Activated CD4-positive, alpha-beta T cell treated with anti-CD3 and anti-CD28 coated beads for 36 hours (primary cell): ENCODE measurements at regions of chr15 and their contacts with region 1.

Region 1: GRCh38 chr15:85330901-85331588 is 49.4 kb upstream of the AKAP13 start:
- DNase-seq: peak; percentile 81
- ATAC-seq: peak; percentile 77
- H3K4me3 Mint-ChIP-seq: peak overlapping the region; percentile 80
- H3K27ac Mint-ChIP-seq: peak overlapping the region; percentile 88
- H3K4me1 Mint-ChIP-seq: peaks cover 46% of the 10 kb centered on the region
- H3K27me3 Mint-ChIP-seq: no peaks in the 10 kb centered on the region

Region 2: GRCh38 chr15:85296615-85297402 is 34.2 kb before region 1 on chr15:
- CTCF ChIA-PET with region 1: interaction called, 22 read pairs
- POLR2A ChIA-PET with region 1: no interaction called
- intact Hi-C with region 1: loop called (anchors 1 to 2 kb)
- DNase-seq: peak; percentile 79
- ATAC-seq: peak; percentile 100
- H3K4me3 Mint-ChIP-seq: no peak overlapping the region
- H3K27ac Mint-ChIP-seq: peak overlapping the region; percentile 38
- H3K4me1 Mint-ChIP-seq: peaks cover 11% of the 10 kb centered on the region
- H3K27me3 Mint-ChIP-seq: peaks cover 1% of the 10 kb centered on the region

Region 3: DNA sequence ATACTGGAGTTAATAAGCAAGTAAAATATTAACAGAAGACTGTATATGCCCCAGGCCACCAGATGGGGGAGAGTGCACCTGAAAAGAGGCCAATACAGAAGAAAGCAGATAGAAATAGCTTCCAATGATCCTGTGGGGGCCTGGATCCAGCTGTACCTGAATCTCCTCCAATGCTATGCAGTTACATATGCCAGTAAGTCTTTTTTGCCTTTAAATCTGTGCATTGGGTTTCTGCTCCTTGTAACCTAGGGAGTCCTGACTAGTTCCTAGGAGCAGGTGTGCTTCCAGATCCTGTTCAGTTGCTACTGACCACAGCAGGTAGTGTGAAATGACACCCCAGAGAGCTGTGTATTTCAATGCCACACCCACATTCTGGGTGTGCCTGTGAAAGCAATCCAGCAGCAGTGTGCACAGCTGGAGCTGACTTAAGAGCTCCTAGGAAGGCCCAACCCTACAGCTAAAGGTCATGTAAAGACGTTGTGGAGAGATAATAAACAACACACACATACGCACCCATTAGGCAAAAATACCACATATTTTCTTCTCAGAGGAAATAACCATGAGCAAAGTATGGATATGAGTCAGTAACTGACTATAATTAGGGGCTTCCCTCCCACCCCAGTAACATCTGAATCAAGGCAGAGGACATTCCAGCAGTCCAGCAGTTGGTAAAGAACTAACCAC is 12.9 kb before region 1 on chr15:
- CTCF ChIA-PET with region 1: interaction called, 14 read pairs
- POLR2A ChIA-PET with region 1: interaction called, 12 read pairs
- intact Hi-C with region 1: loop called in 1 of 2 experiments (anchors 2 kb)
- DNase-seq: peak; percentile 40
- ATAC-seq: peak; percentile 73
- H3K4me3 Mint-ChIP-seq: peak overlapping the region; percentile 11
- H3K27ac Mint-ChIP-seq: peak overlapping the region; percentile 33
- H3K4me1 Mint-ChIP-seq: peaks cover 53% of the 10 kb centered on the region
- H3K27me3 Mint-ChIP-seq: no peaks in the 10 kb centered on the region

Region 4: DNA sequence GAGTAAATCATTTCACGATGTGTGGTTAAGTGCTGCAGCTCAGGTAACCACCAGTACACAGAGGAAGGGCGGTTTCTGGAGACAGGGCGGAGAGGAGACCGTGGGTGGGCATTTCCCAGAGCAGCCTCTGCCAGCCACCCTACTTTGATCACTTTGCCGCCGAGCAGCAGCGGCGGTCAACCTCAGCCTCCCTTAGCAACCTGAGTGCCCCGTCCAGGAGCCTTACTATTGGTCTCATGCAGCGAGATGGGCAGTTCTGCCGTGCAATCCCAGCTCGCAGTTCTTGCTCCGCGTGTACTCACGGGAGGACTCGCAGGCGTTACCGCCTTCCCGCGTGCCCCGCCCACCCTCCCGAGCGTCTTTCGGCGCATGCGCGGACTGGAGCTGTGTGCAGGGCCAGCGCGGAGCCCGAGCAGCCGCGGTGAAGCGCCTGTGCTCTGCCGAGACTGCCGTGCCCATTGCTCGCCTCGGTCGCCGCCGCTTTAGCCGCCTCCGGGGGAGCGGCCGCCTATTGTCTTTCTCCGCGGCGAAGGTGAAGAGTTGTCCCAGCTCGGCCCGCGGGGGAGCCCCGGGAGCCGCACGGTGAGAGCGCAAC is 49.3 kb after region 1 on chr15 and contains the start of gene AKAP13:
- CTCF ChIA-PET with region 1: interaction called, 4 read pairs
- POLR2A ChIA-PET with region 1: interaction called, 6 read pairs
- intact Hi-C with region 1: loop called in 1 of 2 experiments (anchors 1 kb)
- DNase-seq: peak; percentile 97
- ATAC-seq: peak; percentile 90
- H3K4me3 Mint-ChIP-seq: peak within 1 kb of the TSS; percentile 72
- H3K27ac Mint-ChIP-seq: peak within 1 kb of the TSS; percentile 92
- H3K4me1 Mint-ChIP-seq: peaks cover 50% of the 10 kb centered on the region
- H3K27me3 Mint-ChIP-seq: no peaks in the 10 kb centered on the region
- total RNA-seq, gene AKAP13: 85.1 to 104 TPM

Region 5: DNA sequence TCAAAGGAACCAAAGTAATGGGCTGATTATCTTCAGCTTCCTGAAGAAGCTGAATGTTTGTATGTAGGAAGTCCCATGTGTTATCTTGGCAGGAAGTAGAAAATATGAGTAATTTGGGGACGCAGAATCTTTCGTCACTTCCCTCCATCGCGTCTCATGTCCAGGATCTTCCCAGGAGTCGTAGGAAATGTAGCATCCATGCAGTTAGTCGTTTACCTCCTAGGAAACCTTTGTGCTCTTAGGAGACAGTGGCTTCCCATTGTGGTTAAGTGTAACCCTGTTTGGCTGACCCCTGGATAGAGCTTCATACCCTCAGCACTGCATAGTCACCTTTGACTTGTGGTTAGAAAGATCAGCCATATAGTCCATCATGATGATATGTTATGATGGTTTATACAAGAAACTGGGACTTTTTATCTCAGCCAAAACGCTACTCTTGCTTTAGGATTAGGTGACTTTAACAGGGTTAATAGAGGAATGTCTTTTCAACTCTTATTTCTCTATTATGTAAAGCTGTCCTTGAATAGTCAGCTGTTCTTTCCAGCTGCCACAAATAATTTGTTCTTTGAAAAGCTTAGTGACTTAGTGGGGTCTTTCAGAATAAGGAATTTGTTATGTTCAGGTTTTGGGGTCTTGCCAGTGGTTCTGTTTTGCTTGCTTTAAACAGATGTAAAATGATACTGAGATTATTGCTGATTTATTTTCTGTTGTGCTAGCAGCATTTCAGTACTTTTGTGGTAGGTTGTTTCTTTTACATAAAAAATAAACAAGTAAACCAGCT is 371.5 kb after region 1 on chr15:
- CTCF ChIA-PET with region 1: no interaction called
- POLR2A ChIA-PET with region 1: no interaction called
- intact Hi-C with region 1: loop called in 1 of 2 experiments (anchors 5 kb)
- DNase-seq: peak; percentile 46
- ATAC-seq: peak; percentile 53
- H3K4me3 Mint-ChIP-seq: peak overlapping the region; percentile 70
- H3K27ac Mint-ChIP-seq: peak overlapping the region; percentile 94
- H3K4me1 Mint-ChIP-seq: peaks cover 73% of the 10 kb centered on the region
- H3K27me3 Mint-ChIP-seq: no peaks in the 10 kb centered on the region